ENCODE measurements at regions of chrX and their contacts with region 1.

Region 1: GRCh38 chrX:20382518-20383297 is 116.0 kb upstream of the RPS6KA3 start:
- DNase-seq: peak; percentile 25
- H3K4me3 Mint-ChIP-seq: no peak overlapping the region
- H3K27ac Mint-ChIP-seq: no peak overlapping the region
- H3K4me1 Mint-ChIP-seq: peaks cover 23% of the 10 kb centered on the region
- H3K27me3 Mint-ChIP-seq: no peaks in the 10 kb centered on the region

Region 2: GRCh38 chrX:20141281-20142220 is 241.2 kb before region 1 on chrX and contains the start of gene EIF1AX:
- CTCF ChIA-PET with region 1: interaction called, 5 read pairs
- intact Hi-C with region 1: loop called (anchors 5 kb)
- DNase-seq: peak; percentile 97
- H3K4me3 Mint-ChIP-seq: peak within 1 kb of the TSS; percentile 81
- H3K27ac Mint-ChIP-seq: peak within 1 kb of the TSS; percentile 80
- H3K4me1 Mint-ChIP-seq: peaks cover 38% of the 10 kb centered on the region
- H3K27me3 Mint-ChIP-seq: no peaks in the 10 kb centered on the region
- total RNA-seq, gene EIF1AX: 106 to 109 TPM

Region 3: DNA sequence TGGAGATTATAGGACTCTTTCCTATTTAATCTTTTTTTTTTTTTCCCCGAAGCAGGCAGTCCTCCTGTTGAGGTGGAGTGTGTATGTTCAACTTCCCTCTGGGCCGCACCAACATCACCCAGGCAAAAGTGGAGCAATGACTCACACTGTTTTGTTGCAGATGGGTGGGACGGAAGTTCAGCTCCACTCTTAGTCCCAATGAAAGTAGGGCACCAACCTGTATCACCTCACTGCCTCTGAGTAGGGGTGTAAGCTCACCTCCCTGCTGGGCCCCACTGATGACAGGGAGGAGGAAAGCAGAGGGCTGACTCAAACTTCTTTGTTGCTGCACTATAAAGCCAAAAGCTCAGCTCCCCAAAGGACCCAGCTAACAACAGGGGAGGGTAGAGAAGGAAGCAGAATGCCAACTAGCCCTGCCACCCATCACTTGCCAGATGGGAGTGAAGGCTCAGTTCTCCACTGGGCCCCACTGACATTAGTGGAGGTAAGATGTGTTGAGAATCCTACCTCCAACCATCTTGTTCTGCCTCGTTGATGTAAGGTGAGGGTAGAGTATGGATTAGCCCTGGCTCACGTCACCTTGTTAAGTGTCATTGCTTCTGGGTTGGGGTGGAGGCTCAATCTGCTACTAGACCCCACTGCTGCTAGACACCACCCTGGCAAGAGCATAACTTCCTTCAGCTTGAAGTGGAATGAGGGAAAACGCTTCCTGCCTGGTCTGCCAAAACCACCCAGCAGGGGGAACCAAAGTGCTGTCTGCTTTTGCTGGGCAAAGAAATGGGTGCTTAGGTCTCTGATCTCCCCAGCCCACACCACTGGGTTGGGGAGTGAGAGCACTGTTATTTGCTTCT is 130.1 kb before region 1 on chrX:
- CTCF ChIA-PET with region 1: interaction called, 6 read pairs
- intact Hi-C with region 1: loop called (anchors 1 kb)
- DNase-seq: peak; percentile 75
- H3K4me3 Mint-ChIP-seq: no peak overlapping the region
- H3K27ac Mint-ChIP-seq: peak overlapping the region; percentile 46
- H3K4me1 Mint-ChIP-seq: peaks cover 39% of the 10 kb centered on the region
- H3K27me3 Mint-ChIP-seq: no peaks in the 10 kb centered on the region

Region 4: GRCh38 chrX:20352935-20353336 is 29.8 kb before region 1 on chrX:
- CTCF ChIA-PET with region 1: interaction called, 3 read pairs
- intact Hi-C with region 1: loop called (anchors 1 kb)
- DNase-seq: no peak
- H3K4me3 Mint-ChIP-seq: no peak overlapping the region
- H3K27ac Mint-ChIP-seq: no peak overlapping the region
- H3K4me1 Mint-ChIP-seq: peaks cover 24% of the 10 kb centered on the region
- H3K27me3 Mint-ChIP-seq: no peaks in the 10 kb centered on the region

Region 5: GRCh38 chrX:20414762-20415445 is 32.2 kb after region 1 on chrX:
- CTCF ChIA-PET with region 1: interaction called, 3 read pairs
- intact Hi-C with region 1: loop called (anchors 1 kb)
- DNase-seq: peak; percentile 18
- H3K4me3 Mint-ChIP-seq: no peak overlapping the region
- H3K27ac Mint-ChIP-seq: no peak overlapping the region
- H3K4me1 Mint-ChIP-seq: peaks cover 40% of the 10 kb centered on the region
- H3K27me3 Mint-ChIP-seq: no peaks in the 10 kb centered on the region

Measured in activated naive CD4-positive, alpha-beta T cell treated with anti-CD3 and anti-CD28 coated beads for 36 hours (primary cell).